Endothelial cell of umbilical vein (primary cell): ENCODE measurements at regions of chr2 and their contacts with region 1.

Region 1: GRCh38 chr2:43024515-43025011 is 201.8 kb downstream of the ZFP36L2 start:
- DNase-seq: peak; percentile 64
- H3K4me3 ChIP-seq: no peak overlapping the region
- H3K27ac ChIP-seq: no peak overlapping the region
- H3K4me1 ChIP-seq: no peaks in the 10 kb centered on the region
- H3K27me3 ChIP-seq: no peaks in the 10 kb centered on the region
- CTCF ChIP-seq: peak; percentile 71 to 94
- POLR2A ChIP-seq: no peak

Region 2: DNA sequence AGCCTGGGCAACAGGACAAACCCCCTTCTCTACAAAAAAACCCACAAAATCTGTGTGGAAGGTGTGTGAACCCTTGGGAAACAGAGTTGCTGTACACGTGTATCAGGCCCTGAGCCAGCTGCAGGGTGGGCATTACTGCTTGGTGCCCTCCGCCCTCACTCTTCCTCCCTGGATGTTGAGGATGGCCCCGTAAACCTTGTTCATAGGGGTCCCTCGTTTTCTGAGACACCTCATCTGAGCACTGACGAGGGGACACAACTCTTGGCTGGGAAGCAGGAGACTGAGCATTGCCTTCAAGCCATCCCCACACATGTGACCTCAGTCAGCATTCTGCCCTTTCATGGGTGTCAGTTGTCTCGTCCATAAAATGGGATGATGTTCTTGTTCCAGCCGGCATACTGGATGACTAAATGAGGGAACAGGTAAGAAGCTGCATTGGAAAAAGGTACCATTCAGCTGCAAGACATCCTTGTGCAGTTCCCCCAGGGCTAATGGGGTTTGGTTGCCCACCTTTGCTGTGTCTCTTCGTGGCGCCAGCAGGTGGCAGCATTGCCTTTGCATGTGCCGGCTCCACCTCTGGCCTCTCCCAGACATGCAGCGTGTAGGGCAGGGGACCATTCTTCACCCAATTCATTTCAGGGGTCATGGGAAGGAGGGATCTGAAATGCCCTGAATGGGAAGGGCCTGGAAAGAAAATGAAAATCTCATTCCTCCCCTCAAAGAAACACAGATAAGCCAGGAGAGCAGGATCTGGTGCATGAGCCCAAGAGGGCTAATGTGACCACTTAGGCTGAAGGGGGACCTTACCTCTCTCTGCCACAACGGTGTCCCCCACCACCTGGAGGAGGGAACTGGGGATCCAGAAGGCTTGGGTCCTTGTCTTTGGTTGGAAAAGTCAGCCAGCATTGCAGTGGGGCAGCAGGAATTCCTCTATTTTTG is 195.8 kb before region 1 on chr2:
- CTCF ChIA-PET with region 1: no interaction called
- POLR2A ChIA-PET with region 1: no interaction called
- dilution Hi-C with region 1: no loop called
- intact Hi-C with region 1: loop called (anchors 2 kb)
- DNase-seq: peak; percentile 66
- H3K4me3 ChIP-seq: no peak overlapping the region
- H3K27ac ChIP-seq: no peak overlapping the region
- H3K4me1 ChIP-seq: no peaks in the 10 kb centered on the region
- H3K27me3 ChIP-seq: no peaks in the 10 kb centered on the region
- CTCF ChIP-seq: peak; percentile 91 to 93
- POLR2A ChIP-seq: no peak

Region 3: GRCh38 chr2:42974721-42975717 is 49.5 kb before region 1 on chr2:
- CTCF ChIA-PET with region 1: interaction called, 11 read pairs
- POLR2A ChIA-PET with region 1: no interaction called
- dilution Hi-C with region 1: no loop called
- intact Hi-C with region 1: loop called (anchors 5 kb)
- DNase-seq: peak; percentile 66
- H3K4me3 ChIP-seq: peak overlapping the region in 2 of 3 experiments; percentile 21 to 44
- H3K27ac ChIP-seq: no peak overlapping the region
- H3K4me1 ChIP-seq: peaks cover 4% of the 10 kb centered on the region
- H3K27me3 ChIP-seq: no peaks in the 10 kb centered on the region
- CTCF ChIP-seq: peak; percentile 81 to 95
- POLR2A ChIP-seq: no peak

Region 4: GRCh38 chr2:43041661-43042360 is 17.2 kb after region 1 on chr2:
- CTCF ChIA-PET with region 1: interaction called, 10 read pairs
- POLR2A ChIA-PET with region 1: no interaction called
- dilution Hi-C with region 1: no loop called
- intact Hi-C with region 1: no loop called
- DNase-seq: peak; percentile 98
- H3K4me3 ChIP-seq: no peak overlapping the region
- H3K27ac ChIP-seq: peak overlapping the region; percentile 45
- H3K4me1 ChIP-seq: peaks cover 42% of the 10 kb centered on the region
- H3K27me3 ChIP-seq: no peaks in the 10 kb centered on the region
- CTCF ChIP-seq: no peak
- POLR2A ChIP-seq: no peak

Region 5: DNA sequence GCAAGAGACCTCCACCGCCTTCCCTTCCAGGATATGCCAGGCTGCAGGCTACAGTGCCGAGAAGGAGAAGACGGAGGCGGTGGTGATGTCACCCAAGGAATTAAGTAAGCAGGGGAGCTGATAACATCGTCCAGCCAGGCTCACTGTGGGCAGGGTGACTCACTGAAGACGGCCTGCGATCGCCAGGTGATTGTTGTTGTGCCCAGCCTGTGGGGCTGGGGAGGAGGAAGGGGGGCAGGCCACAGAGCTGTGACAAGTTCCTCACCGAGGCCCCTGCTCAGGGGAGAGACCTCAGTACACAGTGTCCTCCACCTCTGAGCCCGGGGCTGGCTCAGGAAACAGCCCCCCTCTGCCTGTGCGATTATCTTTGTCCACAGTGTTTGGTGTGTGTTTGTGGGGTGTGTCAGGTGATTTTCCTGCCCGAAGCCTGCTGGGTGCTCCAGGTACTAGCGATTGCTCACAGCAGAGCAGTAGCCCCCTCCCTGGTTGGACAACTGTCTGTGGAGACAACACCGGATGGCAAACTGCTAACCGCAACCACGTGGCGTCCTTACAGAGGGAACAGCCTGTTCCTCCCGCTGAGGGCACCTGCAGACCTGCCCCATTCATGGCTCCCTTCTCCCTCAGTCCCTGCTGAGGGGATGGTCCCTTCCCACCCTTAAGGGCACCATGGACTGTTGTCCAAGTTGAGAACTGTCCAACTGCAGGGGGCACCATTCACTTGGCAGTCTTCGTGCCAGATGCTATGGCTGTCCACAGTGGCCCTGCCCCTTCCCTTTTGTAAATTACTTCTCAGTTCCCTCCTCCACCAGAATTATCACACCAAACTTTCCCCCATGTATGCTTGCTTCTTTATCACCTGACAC is 106.7 kb after region 1 on chr2:
- CTCF ChIA-PET with region 1: interaction called, 18 read pairs
- POLR2A ChIA-PET with region 1: interaction called, 3 read pairs
- dilution Hi-C with region 1: no loop called
- intact Hi-C with region 1: loop called (anchors 1 kb)
- DNase-seq: peak; percentile 82
- H3K4me3 ChIP-seq: no peak overlapping the region
- H3K27ac ChIP-seq: peak overlapping the region; percentile 38
- H3K4me1 ChIP-seq: peaks cover 15% of the 10 kb centered on the region
- H3K27me3 ChIP-seq: no peaks in the 10 kb centered on the region
- CTCF ChIP-seq: peak; percentile 52 to 58
- POLR2A ChIP-seq: no peak

Region 6: GRCh38 chr2:43219383-43220228 is 195.0 kb after region 1 on chr2:
- CTCF ChIA-PET with region 1: interaction called, 52 read pairs
- POLR2A ChIA-PET with region 1: interaction called, 4 read pairs
- dilution Hi-C with region 1: no loop called
- intact Hi-C with region 1: no loop called
- DNase-seq: peak; percentile 84
- H3K4me3 ChIP-seq: peak overlapping the region in 2 of 3 experiments; percentile 0 to 37
- H3K27ac ChIP-seq: peak overlapping the region; percentile 88
- H3K4me1 ChIP-seq: peaks cover 54% of the 10 kb centered on the region
- H3K27me3 ChIP-seq: no peaks in the 10 kb centered on the region
- CTCF ChIP-seq: no peak
- POLR2A ChIP-seq: peak; percentile 62